ENCODE measurements at regions of chr11 and their contacts with region 1.

Region 1: DNA sequence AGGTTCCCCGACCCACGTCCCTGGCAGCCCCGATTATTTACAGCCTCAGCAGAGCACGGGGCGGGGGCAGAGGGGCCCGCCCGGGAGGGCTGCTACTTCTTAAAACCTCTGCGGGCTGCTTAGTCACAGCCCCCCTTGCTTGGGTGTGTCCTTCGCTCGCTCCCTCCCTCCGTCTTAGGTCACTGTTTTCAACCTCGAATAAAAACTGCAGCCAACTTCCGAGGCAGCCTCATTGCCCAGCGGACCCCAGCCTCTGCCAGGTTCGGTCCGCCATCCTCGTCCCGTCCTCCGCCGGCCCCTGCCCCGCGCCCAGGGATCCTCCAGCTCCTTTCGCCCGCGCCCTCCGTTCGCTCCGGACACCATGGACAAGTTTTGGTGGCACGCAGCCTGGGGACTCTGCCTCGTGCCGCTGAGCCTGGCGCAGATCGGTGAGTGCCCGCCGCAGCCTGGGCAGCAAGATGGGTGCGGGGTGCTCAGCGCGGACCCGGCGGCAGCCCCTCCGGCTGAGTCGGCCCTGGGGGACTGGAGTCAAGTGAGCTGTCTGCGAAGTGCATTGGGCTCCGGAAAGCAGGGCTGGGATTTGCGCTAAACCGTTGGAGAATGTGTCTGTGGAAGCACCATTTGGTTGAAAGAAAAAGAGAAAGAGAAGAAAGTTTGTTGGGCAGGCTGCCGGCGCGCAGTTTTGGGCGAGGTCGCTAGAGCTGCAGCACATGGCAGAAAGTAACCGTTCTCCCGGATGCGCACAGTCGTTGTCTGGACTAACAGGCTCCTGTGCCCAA is at the start of gene CD44:
- DNase-seq: peak; percentile 72 to 94 (median 80)
- ATAC-seq: peak; percentile 77 to 78
- H3K4me3 Mint-ChIP-seq: peak within 1 kb of the TSS; percentile 86 to 100 (median 97)
- H3K27ac Mint-ChIP-seq: peak within 1 kb of the TSS; percentile 92 to 99 (median 96)
- H3K4me1 Mint-ChIP-seq: peaks cover 30 to 60% (median 52%) of the 10 kb centered on the region in 4 donors
- H3K27me3 Mint-ChIP-seq: peaks cover 0 to 2% (median 0%) of the 10 kb centered on the region in 5 donors
- polyA plus RNA-seq, gene CD44: 291 TPM

Region 2: DNA sequence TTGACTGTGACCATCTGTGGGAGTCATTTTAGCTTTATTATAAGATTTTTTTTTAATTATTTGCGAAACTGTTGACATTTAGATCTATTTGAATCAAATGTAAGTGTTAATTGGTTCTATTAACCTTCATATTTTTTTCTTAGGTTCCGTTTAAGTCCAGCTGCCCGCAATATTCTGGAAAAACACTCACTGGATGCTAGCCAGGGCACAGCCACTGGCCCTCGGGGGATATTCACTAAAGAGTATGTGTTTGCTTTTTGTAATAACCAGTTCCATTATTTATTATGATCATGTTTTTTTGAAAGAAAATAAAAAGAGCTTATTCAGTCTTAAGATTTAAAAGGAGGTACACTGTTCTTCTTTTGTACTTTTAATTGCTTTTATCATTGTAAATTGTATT is 178.9 kb before region 1 on chr11:
- POLR2A ChIA-PET with region 1: no interaction called
- DNase-seq: no peak
- ATAC-seq: no peak
- H3K4me3 Mint-ChIP-seq: no peak overlapping the region
- H3K27ac Mint-ChIP-seq: no peak overlapping the region
- H3K4me1 Mint-ChIP-seq: peaks cover 0 to 3% (median under 1%) of the 10 kb centered on the region in 4 donors
- H3K27me3 Mint-ChIP-seq: no peaks in the 10 kb centered on the region

Region 3: DNA sequence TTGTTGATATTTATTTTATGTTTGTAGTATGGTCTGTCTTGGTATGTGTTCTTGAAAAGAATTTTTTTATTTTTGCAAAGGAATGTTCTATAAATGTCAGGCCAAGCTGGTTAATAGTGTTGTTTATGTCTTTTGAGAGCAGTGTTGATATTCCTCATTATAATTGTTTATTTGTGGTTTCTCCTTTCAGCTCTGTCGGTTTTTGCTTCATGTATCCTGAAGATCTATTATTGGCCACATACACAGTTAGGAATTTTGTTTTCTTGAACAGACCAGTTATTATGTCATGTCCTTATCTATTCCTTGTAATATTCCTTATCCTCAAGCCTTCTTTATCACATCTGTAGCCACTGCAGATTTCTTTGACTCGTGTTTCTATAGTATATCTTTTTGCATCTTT is 166.2 kb before region 1 on chr11:
- POLR2A ChIA-PET with region 1: no interaction called
- DNase-seq: no peak
- ATAC-seq: no peak
- H3K4me3 Mint-ChIP-seq: no peak overlapping the region
- H3K27ac Mint-ChIP-seq: no peak overlapping the region
- H3K4me1 Mint-ChIP-seq: peaks cover 10 to 23% (median 19%) of the 10 kb centered on the region in 4 donors
- H3K27me3 Mint-ChIP-seq: no peaks in the 10 kb centered on the region

Region 4: GRCh38 chr11:35050541-35050995 is 88.6 kb before region 1 on chr11:
- POLR2A ChIA-PET with region 1: interaction called, 39 read pairs
- DNase-seq: peak in 1 of 10 donors; percentile 16
- ATAC-seq: no peak
- H3K4me3 Mint-ChIP-seq: peak overlapping the region; percentile 46 to 80 (median 72)
- H3K27ac Mint-ChIP-seq: peak overlapping the region; percentile 82 to 100 (median 92)
- H3K4me1 Mint-ChIP-seq: peaks cover 33 to 65% (median 62%) of the 10 kb centered on the region in 4 donors
- H3K27me3 Mint-ChIP-seq: no peaks in the 10 kb centered on the region

Region 5: GRCh38 chr11:35087648-35088047 is 51.5 kb before region 1 on chr11:
- POLR2A ChIA-PET with region 1: interaction called, 11 read pairs
- DNase-seq: no peak
- ATAC-seq: no peak
- H3K4me3 Mint-ChIP-seq: peak overlapping the region in 1 of 10 donors; percentile 26
- H3K27ac Mint-ChIP-seq: peak overlapping the region in 7 of 10 donors; percentile 5 to 71 (median 48)
- H3K4me1 Mint-ChIP-seq: peaks cover 32 to 86% (median 67%) of the 10 kb centered on the region in 4 donors
- H3K27me3 Mint-ChIP-seq: no peaks in the 10 kb centered on the region

Region 6: GRCh38 chr11:35158701-35159510 is 19.8 kb after region 1 on chr11:
- POLR2A ChIA-PET with region 1: interaction called, 163 read pairs
- DNase-seq: no peak
- ATAC-seq: no peak
- H3K4me3 Mint-ChIP-seq: peak overlapping the region; percentile 33 to 91 (median 68)
- H3K27ac Mint-ChIP-seq: peak overlapping the region; percentile 89 to 100 (median 100)
- H3K4me1 Mint-ChIP-seq: peaks cover 64 to 100% (median 100%) of the 10 kb centered on the region in 4 donors
- H3K27me3 Mint-ChIP-seq: no peaks in the 10 kb centered on the region

Region 7: DNA sequence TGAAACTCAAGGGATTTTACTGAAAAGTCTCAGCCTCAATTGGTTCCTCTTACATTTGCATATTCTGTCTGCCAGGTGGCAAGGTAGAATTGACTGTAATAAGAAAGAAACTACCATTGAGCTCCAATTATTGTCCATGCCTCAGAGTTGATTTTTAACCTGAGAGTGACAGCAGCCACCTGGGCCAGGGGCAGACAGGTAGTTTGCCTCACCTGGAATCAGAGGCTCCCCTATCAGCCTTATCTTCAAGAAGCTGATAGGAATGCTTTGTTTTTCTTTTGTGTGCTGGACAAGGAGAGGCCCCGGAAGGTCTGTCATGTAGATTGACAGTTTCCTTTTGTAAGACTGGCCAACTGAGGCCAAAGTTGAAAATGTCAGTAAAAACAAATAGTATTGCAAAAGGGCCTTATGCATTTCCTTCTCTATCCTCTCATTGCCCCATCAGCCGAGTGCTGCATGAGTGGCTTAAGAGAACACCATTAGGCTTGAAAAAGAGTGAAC is 33.9 kb after region 1 on chr11:
- POLR2A ChIA-PET with region 1: interaction called, 163 read pairs
- DNase-seq: peak in 1 of 10 donors; percentile 29
- ATAC-seq: no peak
- H3K4me3 Mint-ChIP-seq: peak overlapping the region; percentile 56 to 83 (median 78)
- H3K27ac Mint-ChIP-seq: peak overlapping the region; percentile 89 to 100 (median 100)
- H3K4me1 Mint-ChIP-seq: peaks cover 53 to 96% (median 94%) of the 10 kb centered on the region in 4 donors
- H3K27me3 Mint-ChIP-seq: no peaks in the 10 kb centered on the region

Region 8: DNA sequence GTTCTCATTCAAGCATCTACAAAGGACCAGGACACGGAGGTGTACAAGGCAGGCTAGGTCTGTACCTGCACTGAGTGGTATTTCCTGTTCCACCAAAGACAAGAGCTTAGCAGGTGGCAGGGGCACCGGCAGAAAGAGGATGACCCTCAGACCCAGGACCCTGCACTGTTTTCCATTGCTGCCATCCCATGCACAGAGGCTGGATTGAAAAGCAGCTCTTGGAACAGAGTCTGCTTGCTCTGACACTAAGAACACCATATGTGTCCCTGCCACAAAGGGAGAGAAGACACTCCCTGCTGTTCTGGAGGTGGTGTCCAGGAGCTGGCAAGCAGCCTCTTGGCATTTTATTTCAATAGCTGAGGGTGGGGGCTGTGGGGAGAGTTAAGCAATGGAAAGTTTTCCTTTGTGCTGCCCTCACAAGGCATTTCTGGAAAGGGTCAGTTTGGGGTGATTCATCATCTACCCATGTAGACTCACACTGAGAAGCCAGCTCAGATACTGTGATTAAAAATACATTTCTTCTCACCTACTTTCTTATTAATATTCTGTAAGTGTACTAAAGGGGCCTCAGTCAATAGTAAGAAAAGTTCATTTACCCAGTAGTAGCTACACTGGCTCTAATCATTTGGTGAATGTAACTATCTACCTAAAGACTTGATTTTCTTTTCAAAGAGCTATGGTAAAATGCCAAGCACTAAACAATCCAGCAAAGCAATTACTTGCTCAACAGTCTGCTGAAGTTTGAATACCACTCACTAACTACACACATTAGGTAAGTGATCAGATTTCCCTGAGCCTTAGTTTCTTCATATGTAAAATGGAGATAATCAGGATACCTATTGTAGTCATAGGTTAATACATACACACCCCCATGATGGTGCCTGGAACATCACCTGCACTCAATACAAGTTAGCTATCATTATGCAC is 225.0 kb after region 1 on chr11:
- POLR2A ChIA-PET with region 1: no interaction called
- DNase-seq: no peak
- ATAC-seq: no peak
- H3K4me3 Mint-ChIP-seq: no peak overlapping the region
- H3K27ac Mint-ChIP-seq: peak overlapping the region in 1 of 10 donors; percentile 2
- H3K4me1 Mint-ChIP-seq: peaks cover 0 to 2% (median 0%) of the 10 kb centered on the region in 4 donors
- H3K27me3 Mint-ChIP-seq: peaks cover 0 to 8% (median 3%) of the 10 kb centered on the region in 5 donors

Measured in naive thymus-derived CD8-positive, alpha-beta T cell (primary cell).